Activated CD4-positive, alpha-beta memory T cell treated with anti-CD3 and anti-CD28 coated beads for 36 hours (primary cell): ENCODE measurements at regions of chr9 and their contacts with region 1.

Region 1: GRCh38 chr9:84953797-84954705 is 284.5 kb downstream of the NTRK2 start:
- DNase-seq: peak; percentile 70
- H3K4me3 Mint-ChIP-seq: no peak overlapping the region
- H3K27ac Mint-ChIP-seq: no peak overlapping the region
- H3K4me1 Mint-ChIP-seq: no peaks in the 10 kb centered on the region
- H3K27me3 Mint-ChIP-seq: peaks cover 10% of the 10 kb centered on the region

Region 2: DNA sequence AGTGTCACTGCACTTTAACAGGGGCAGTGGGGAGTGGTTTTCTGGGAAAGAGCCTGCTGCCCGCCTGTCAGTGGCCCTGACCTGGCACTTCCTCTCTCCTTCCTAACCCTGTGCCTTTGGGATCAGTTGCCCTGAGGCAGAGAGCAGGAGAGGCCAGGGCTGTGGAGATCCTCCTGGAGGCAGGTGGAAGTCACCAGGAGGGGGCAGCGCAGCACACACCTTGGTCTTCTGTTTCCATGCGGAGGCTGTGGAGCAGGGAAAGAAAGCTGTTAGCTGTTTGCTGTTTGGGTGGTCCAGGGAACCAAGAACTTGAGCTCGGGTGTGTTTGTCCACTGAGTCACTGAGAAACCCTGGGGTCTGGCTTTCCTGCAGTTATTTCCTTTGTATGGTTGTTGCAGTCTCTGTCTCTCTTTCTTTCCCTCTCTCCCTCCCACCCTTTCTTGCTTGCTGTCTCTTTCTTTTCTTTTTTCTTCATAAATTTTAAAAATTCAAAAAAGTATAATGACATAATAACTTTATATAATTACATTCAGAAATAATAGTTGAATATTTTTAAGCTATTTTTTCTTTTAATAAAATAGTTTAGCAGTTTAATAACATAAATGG is 256.4 kb before region 1 on chr9:
- CTCF ChIA-PET with region 1: interaction called, 3 read pairs
- POLR2A ChIA-PET with region 1: no interaction called
- intact Hi-C with region 1: loop called (anchors 1 kb)
- DNase-seq: peak; percentile 72
- H3K4me3 Mint-ChIP-seq: no peak overlapping the region
- H3K27ac Mint-ChIP-seq: no peak overlapping the region
- H3K4me1 Mint-ChIP-seq: peaks cover 4% of the 10 kb centered on the region
- H3K27me3 Mint-ChIP-seq: peaks cover 3% of the 10 kb centered on the region

Region 3: GRCh38 chr9:84997472-84997871 is 43.4 kb after region 1 on chr9:
- CTCF ChIA-PET with region 1: no interaction called
- POLR2A ChIA-PET with region 1: no interaction called
- intact Hi-C with region 1: no loop called
- DNase-seq: no peak
- H3K4me3 Mint-ChIP-seq: no peak overlapping the region
- H3K27ac Mint-ChIP-seq: no peak overlapping the region
- H3K4me1 Mint-ChIP-seq: no peaks in the 10 kb centered on the region
- H3K27me3 Mint-ChIP-seq: peaks cover 2% of the 10 kb centered on the region